ENCODE measurements at regions of chr7 and their contacts with region 1.

Region 1: GRCh38 chr7:35707422-35707821 is 12.5 kb upstream of the HERPUD2 start:
- DNase-seq: no peak
- H3K4me3 ChIP-seq: no peak overlapping the region
- H3K27ac ChIP-seq: no peak overlapping the region
- H3K4me1 ChIP-seq: peaks cover 0 to 11% (median 5%) of the 10 kb centered on the region in 4 donors
- H3K27me3 ChIP-seq: no peaks in the 10 kb centered on the region
- CTCF ChIP-seq: no peak
- EP300 ChIP-seq: no peak
- POLR2A ChIP-seq: no peak

Region 2: GRCh38 chr7:35593896-35594295 is 113.5 kb before region 1 on chr7:
- intact Hi-C with region 1: no loop called
- DNase-seq: no peak
- H3K4me3 ChIP-seq: no peak overlapping the region
- H3K27ac ChIP-seq: no peak overlapping the region
- H3K4me1 ChIP-seq: no peaks in the 10 kb centered on the region
- H3K27me3 ChIP-seq: no peaks in the 10 kb centered on the region
- CTCF ChIP-seq: no peak
- EP300 ChIP-seq: no peak
- POLR2A ChIP-seq: no peak

Region 3: DNA sequence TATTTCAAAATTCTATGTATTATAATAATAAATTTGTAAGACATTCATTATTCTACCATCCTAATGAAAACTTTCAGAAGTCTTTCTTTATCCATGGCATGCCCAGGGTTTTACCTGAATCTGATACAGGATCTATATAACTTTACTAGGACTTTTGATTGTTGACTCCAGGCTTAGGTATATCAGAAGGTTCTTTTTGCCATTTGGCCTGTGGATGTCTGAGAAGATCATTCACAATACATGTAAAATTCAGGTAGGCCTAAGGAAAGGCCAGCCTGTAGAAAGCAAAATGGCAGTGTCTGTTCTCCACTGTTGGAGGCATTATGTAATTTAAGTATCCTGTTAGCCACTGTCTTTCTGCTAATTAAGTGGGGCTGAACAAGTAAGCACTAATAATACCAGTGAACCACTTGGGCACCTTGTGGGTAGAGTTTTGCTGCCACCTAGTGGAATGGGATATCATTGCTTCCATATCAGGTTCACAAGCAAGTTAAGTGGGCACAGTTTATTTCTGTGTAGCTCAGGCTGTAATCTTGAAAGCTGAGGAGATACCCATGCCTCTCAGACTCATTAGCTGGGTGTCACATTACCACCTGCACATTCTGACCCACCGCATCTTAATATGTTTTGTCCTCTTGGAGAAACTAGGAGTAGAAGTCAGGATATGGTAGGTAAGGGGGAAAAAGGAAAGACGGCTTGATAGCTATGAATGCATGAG is 198.9 kb after region 1 on chr7:
- intact Hi-C with region 1: loop called (anchors 5 kb)
- DNase-seq: peak; percentile 44 to 91
- H3K4me3 ChIP-seq: no peak overlapping the region
- H3K27ac ChIP-seq: no peak overlapping the region
- H3K4me1 ChIP-seq: peaks cover 0 to 18% (median 2%) of the 10 kb centered on the region in 4 donors
- H3K27me3 ChIP-seq: no peaks in the 10 kb centered on the region
- CTCF ChIP-seq: peak in 6 of 7 experiments; percentile 61 to 93 (median 90)
- EP300 ChIP-seq: no peak
- POLR2A ChIP-seq: no peak